Mammary epithelial cell (primary cell): ENCODE measurements at regions of chr6 and their contacts with region 1.

Region 1: GRCh38 chr6:138001750-138002349 is 105.4 kb downstream of the PERP start:
- DNase-seq: peak; percentile 43
- H3K4me3 ChIP-seq: no peak overlapping the region
- H3K27ac ChIP-seq: no peak overlapping the region
- H3K4me1 ChIP-seq: peaks cover 11% of the 10 kb centered on the region
- H3K27me3 ChIP-seq: no peaks in the 10 kb centered on the region
- CTCF ChIP-seq: peak; percentile 91

Region 2: GRCh38 chr6:138088330-138088766 is 86.5 kb after region 1 on chr6:
- CTCF ChIA-PET with region 1: no interaction called
- dilution Hi-C with region 1: no loop called
- in situ Hi-C with region 1: no loop called
- intact Hi-C with region 1: loop called (anchors 5 kb)
- DNase-seq: peak; percentile 95
- H3K4me3 ChIP-seq: peak overlapping the region in 2 of 3 experiments; percentile 3 to 9
- H3K27ac ChIP-seq: peak overlapping the region; percentile 98
- H3K4me1 ChIP-seq: peaks cover 41% of the 10 kb centered on the region
- H3K27me3 ChIP-seq: no peaks in the 10 kb centered on the region
- CTCF ChIP-seq: no peak

Region 3: DNA sequence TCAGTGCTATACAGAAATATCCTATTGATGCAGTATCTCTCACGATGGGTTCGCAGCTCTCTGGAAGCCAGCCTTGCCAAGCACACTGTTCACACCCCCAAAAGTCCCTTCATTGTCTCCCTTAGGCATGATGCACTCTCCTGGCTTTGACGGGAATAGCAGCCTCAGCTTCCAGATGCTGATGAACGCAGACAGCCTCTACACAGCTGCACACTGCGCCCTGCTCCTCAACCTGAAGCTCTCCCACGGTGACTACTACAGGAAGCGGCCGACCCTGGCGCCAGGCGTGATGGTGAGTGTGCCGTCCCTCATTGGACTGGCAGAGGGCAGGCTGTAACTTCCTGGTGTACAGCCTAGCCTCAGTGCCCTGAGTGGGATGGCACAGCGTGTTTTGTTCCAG is 276.5 kb after region 1 on chr6:
- CTCF ChIA-PET with region 1: no interaction called
- dilution Hi-C with region 1: no loop called
- in situ Hi-C with region 1: no loop called
- intact Hi-C with region 1: loop called (anchors 5 kb)
- DNase-seq: no peak
- H3K4me3 ChIP-seq: no peak overlapping the region
- H3K27ac ChIP-seq: no peak overlapping the region
- H3K4me1 ChIP-seq: no peaks in the 10 kb centered on the region
- H3K27me3 ChIP-seq: no peaks in the 10 kb centered on the region
- CTCF ChIP-seq: peak; percentile 27 to 43

Region 4: GRCh38 chr6:138410972-138411667 is 409.3 kb after region 1 on chr6:
- CTCF ChIA-PET with region 1: no interaction called
- dilution Hi-C with region 1: no loop called
- in situ Hi-C with region 1: loop called in 1 of 2 experiments (anchors 25 kb)
- intact Hi-C with region 1: loop called (anchors 5 kb)
- DNase-seq: peak; percentile 94
- H3K4me3 ChIP-seq: no peak overlapping the region
- H3K27ac ChIP-seq: peak overlapping the region; percentile 63
- H3K4me1 ChIP-seq: peaks cover 28% of the 10 kb centered on the region
- H3K27me3 ChIP-seq: no peaks in the 10 kb centered on the region
- CTCF ChIP-seq: no peak

Region 5: DNA sequence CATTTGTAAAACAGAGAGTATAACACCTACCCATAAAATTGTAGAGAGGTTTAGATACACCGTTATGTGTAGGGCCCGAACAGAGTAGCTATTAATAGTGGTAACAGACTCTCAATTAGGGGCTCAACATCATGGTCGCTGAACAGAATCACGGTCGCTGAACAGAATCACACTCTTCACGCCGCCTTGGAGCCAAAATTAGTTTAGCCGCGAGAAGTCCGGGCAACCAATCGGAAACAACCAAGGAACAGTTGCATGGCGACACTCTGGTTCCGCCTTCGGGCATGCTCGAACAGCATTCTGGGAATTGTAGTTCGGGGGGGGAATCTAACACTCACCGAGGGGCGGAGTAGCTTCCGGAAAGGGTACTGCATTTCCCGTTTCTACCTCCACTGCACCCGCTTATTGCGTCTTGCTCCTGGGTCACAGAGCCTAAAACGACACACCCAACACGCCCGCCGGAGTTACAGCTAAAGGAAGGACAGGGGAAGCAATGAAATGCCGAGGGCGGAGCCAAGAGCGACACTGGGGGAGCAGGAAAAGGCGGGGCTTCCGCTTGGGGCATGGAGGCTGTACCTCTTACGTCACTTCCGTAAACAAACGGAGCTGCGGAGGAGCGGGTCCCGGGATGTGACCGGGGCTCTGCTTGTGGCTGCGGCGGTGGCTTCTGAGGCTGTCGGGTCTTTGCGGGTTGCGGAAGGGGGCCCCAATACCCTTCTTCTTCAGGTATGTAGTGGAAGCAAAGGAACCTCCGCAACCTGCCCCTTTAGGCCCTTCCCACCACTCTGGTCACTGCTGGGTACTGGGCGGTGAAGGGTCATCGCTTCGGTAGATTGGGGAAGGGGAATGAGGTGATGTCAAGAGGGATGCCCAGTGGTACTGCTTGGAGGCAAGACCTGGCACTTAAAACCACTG is 771.6 kb after region 1 on chr6 and contains the start of gene CCDC28A:
- CTCF ChIA-PET with region 1: no interaction called
- dilution Hi-C with region 1: no loop called
- in situ Hi-C with region 1: no loop called
- intact Hi-C with region 1: loop called (anchors 5 kb)
- DNase-seq: peak; percentile 95
- H3K4me3 ChIP-seq: peak within 1 kb of the TSS; percentile 94 to 96 (median 95)
- H3K27ac ChIP-seq: peak within 1 kb of the TSS; percentile 81
- H3K4me1 ChIP-seq: peaks cover 14% of the 10 kb centered on the region
- H3K27me3 ChIP-seq: no peaks in the 10 kb centered on the region
- CTCF ChIP-seq: no peak
- total RNA-seq, gene CCDC28A: 7.3 to 10.3 TPM